ENCODE measurements at regions of chr17 and their contacts with region 1.

Region 1: GRCh38 chr17:12402963-12403622 is 262.6 kb upstream of the MYOCD start:
- DNase-seq: no peak
- CTCF ChIP-seq: no peak

Region 2: GRCh38 chr17:12310811-12311210 is 92.3 kb before region 1 on chr17:
- CTCF ChIA-PET with region 1: no interaction called
- POLR2A ChIA-PET with region 1: no interaction called
- DNase-seq: no peak
- CTCF ChIP-seq: no peak

Region 3: GRCh38 chr17:12358477-12358876 is 44.6 kb before region 1 on chr17:
- CTCF ChIA-PET with region 1: no interaction called
- POLR2A ChIA-PET with region 1: no interaction called
- DNase-seq: no peak
- CTCF ChIP-seq: no peak

Region 4: DNA sequence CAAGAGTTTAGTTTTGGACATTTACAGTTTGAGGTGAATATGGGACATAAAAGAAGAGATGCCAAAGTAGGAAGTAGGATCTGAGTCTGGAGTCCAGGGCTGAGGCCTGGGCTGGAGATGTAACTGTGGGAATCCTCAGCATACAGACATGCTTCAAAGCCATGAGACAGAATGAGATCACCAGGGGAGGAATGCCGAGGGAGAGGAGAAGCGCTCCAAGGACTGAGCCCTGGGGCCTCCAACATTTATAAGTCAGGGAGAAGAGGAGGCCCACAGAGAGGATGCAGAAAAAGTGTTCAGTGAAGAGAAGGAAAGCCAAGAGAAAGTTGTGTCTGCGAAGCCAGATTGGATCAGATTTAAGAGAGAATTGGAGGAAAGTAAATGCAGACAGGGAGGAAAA is 14.9 kb before region 1 on chr17:
- CTCF ChIA-PET with region 1: no interaction called
- POLR2A ChIA-PET with region 1: no interaction called
- DNase-seq: no peak
- CTCF ChIP-seq: no peak

Region 5: DNA sequence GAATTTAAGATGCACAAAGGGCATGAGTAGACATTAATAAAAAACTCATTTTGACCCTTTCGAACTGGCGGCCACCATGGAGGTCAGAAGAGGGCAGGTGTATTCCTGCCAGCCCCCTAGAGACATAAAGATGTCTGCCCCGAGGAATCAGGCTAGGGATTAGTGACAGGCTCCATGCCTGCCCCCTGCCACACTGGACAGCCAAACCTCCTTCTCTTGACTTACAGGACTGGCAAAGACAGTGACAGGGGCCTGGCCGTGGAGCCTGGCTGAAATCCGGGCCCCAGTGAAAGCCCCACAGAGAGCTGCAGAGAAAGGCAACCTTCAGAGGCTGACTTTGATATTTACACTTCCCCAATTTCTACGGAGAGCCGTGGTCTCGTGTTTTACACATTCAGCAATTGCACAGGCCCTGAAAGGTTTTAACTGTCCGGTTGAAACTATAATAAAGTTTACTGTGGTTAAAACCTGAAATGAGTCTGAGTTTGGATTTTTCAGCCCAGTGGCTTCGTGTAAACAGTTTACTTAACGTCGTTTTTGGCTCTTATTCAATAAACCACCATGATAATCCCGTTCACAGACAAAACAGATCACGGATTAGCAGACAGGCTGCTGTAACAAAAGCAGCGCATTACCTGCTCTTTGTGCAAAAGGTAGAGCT is 18.7 kb after region 1 on chr17:
- CTCF ChIA-PET with region 1: interaction called, 11 read pairs
- POLR2A ChIA-PET with region 1: no interaction called
- DNase-seq: peak; percentile 40
- CTCF ChIP-seq: no peak